ENCODE measurements at regions of chr10 and their contacts with region 1.

Region 1: GRCh38 chr10:89029785-89030437 is 39.3 kb downstream of the FAS start:
- DNase-seq: peak; percentile 48 to 63 (median 59)
- H3K4me3 ChIP-seq: no peak overlapping the region
- H3K4me3 Mint-ChIP-seq: peak overlapping the region in 1 of 8 donors; percentile 17
- H3K27ac ChIP-seq: no peak overlapping the region
- H3K27ac Mint-ChIP-seq: peak overlapping the region in 2 of 7 donors; percentile 5 to 42
- H3K4me1 ChIP-seq: peaks cover 4% of the 10 kb centered on the region
- H3K4me1 Mint-ChIP-seq: peaks cover 7 to 14% (median 9%) of the 10 kb centered on the region in 4 donors
- H3K27me3 ChIP-seq: no peaks in the 10 kb centered on the region
- H3K27me3 Mint-ChIP-seq: no peaks in the 10 kb centered on the region

Region 2: DNA sequence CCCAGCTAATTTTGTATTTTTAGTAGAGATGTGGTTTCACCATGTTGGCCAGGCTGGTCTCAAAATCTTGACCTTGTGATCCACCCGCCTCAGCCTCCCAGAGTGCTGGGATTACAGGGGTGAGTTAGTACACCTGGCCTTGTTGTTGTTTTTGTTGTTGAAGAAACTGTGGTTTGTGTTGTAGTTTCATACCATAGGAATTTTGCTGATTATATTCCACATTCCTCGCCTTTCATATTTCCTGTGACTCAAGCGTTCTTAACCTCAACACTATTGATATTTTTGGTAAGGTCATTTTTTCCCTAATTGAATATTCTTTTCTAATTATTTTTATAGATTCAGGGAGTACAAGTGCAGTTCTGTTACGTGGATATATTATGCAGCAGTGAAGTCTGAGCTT is 349.0 kb before region 1 on chr10:
- CTCF ChIA-PET with region 1: no interaction called
- POLR2A ChIA-PET with region 1: no interaction called
- intact Hi-C with region 1: no loop called
- DNase-seq: no peak
- H3K4me3 ChIP-seq: no peak overlapping the region
- H3K4me3 Mint-ChIP-seq: no peak overlapping the region
- H3K27ac ChIP-seq: no peak overlapping the region
- H3K27ac Mint-ChIP-seq: no peak overlapping the region
- H3K4me1 ChIP-seq: no peaks in the 10 kb centered on the region
- H3K4me1 Mint-ChIP-seq: no peaks in the 10 kb centered on the region
- H3K27me3 ChIP-seq: no peaks in the 10 kb centered on the region
- H3K27me3 Mint-ChIP-seq: peaks cover 7 to 8% of the 10 kb centered on the region in 2 donors

Region 3: DNA sequence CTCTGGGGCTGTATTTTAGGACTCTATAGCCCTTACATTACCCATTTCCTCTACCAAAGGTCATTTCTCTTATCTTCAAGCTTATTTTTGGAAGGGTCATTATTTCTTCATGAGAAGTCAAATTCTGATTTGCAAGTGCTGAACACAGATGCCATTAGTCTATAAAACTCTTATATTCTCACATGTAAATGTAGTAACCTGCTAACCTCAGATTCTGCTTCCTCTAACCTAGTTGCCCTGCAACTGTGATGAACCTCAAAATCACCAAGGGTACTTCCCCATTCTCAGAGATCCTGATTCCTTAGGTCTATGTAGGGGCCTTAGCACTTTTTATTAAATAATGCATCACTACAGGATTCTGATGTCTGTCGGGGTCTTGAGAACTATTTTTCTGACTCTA is 33.0 kb before region 1 on chr10:
- CTCF ChIA-PET with region 1: interaction called, 19 read pairs
- POLR2A ChIA-PET with region 1: interaction called, 7 read pairs
- intact Hi-C with region 1: no loop called
- DNase-seq: peak in 1 of 5 donors; percentile 38
- H3K4me3 ChIP-seq: no peak overlapping the region
- H3K4me3 Mint-ChIP-seq: peak overlapping the region in 7 of 8 donors; percentile 4 to 72 (median 55)
- H3K27ac ChIP-seq: peak overlapping the region; percentile 68
- H3K27ac Mint-ChIP-seq: peak overlapping the region; percentile 25 to 82 (median 73)
- H3K4me1 ChIP-seq: peaks cover 89% of the 10 kb centered on the region
- H3K4me1 Mint-ChIP-seq: peaks cover 55 to 90% (median 74%) of the 10 kb centered on the region in 4 donors
- H3K27me3 ChIP-seq: no peaks in the 10 kb centered on the region
- H3K27me3 Mint-ChIP-seq: no peaks in the 10 kb centered on the region

Region 4: GRCh38 chr10:89042562-89042961 is 12.7 kb after region 1 on chr10:
- CTCF ChIA-PET with region 1: interaction called, 10 read pairs
- POLR2A ChIA-PET with region 1: no interaction called
- intact Hi-C with region 1: no loop called
- DNase-seq: no peak
- H3K4me3 ChIP-seq: no peak overlapping the region
- H3K4me3 Mint-ChIP-seq: no peak overlapping the region
- H3K27ac ChIP-seq: no peak overlapping the region
- H3K27ac Mint-ChIP-seq: no peak overlapping the region
- H3K4me1 ChIP-seq: no peaks in the 10 kb centered on the region
- H3K4me1 Mint-ChIP-seq: peaks cover 0 to 8% (median 2%) of the 10 kb centered on the region in 4 donors
- H3K27me3 ChIP-seq: no peaks in the 10 kb centered on the region
- H3K27me3 Mint-ChIP-seq: no peaks in the 10 kb centered on the region

Region 5: DNA sequence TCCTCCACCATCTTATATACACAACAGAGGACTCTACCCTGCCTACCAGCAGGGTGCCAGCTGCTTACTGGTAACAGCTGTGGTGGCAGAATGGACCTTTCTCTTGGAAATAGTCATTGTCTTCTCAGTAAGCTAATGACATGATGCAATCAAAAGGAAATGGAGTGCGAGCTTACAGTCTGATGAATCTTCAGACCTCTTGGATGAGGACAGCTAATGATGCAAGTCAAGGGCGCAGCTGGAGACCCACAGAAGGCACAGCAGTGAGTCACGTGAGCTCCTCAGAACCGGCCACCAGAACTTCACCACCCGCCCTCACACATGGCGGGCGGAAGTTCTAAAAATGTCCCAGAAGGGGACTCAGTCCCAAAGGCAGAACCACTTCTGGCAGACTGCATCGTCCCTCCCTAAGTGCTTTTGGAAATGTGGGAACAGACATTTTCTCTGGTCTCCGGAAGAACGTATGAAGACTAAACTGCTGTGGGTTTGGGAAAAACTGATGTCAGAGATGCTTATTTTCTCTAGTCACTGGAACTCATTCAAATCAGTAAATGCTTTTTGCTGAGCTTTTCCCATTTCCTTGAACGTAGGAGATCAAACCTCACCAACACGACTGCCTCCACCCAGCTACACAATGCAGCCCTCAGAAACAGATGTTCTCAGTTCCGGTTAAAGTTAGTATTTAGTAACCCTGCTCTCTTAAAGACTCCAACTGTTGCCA is 57.0 kb after region 1 on chr10:
- CTCF ChIA-PET with region 1: interaction called, 11 read pairs
- POLR2A ChIA-PET with region 1: no interaction called
- intact Hi-C with region 1: loop called (anchors 5 kb)
- DNase-seq: peak in 1 of 5 donors; percentile 8
- H3K4me3 ChIP-seq: no peak overlapping the region
- H3K4me3 Mint-ChIP-seq: peak overlapping the region in 2 of 8 donors; percentile 22 to 47
- H3K27ac ChIP-seq: no peak overlapping the region
- H3K27ac Mint-ChIP-seq: peak overlapping the region in 2 of 7 donors; percentile 24 to 72
- H3K4me1 ChIP-seq: peaks cover 45% of the 10 kb centered on the region
- H3K4me1 Mint-ChIP-seq: peaks cover 0 to 9% (median 6%) of the 10 kb centered on the region in 4 donors
- H3K27me3 ChIP-seq: no peaks in the 10 kb centered on the region
- H3K27me3 Mint-ChIP-seq: no peaks in the 10 kb centered on the region

Region 6: GRCh38 chr10:89207181-89207800 is 177.4 kb after region 1 on chr10 and contains the start of gene CH25H:
- CTCF ChIA-PET with region 1: interaction called, 34 read pairs
- POLR2A ChIA-PET with region 1: interaction called, 6 read pairs
- intact Hi-C with region 1: no loop called
- DNase-seq: peak; percentile 31 to 59 (median 41)
- H3K4me3 ChIP-seq: peak within 1 kb of the TSS; percentile 43 to 55
- H3K4me3 Mint-ChIP-seq: peak within 1 kb of the TSS; percentile 84 to 95 (median 87)
- H3K27ac ChIP-seq: no peak within 1 kb of the TSS
- H3K27ac Mint-ChIP-seq: peak within 1 kb of the TSS; percentile 6 to 83 (median 71)
- H3K4me1 ChIP-seq: peaks cover 17% of the 10 kb centered on the region
- H3K4me1 Mint-ChIP-seq: peaks cover 9 to 15% (median 13%) of the 10 kb centered on the region in 4 donors
- H3K27me3 ChIP-seq: peaks cover 6% of the 10 kb centered on the region
- H3K27me3 Mint-ChIP-seq: peaks cover 18 to 23% of the 10 kb centered on the region in 2 donors
- total RNA-seq, gene CH25H: not detected

Measured in CD4-positive, alpha-beta memory T cell (primary cell).